Right cardiac atrium (tissue), 5 donors: ENCODE measurements at regions of chr1 and their contacts with region 1.

Region 1: DNA sequence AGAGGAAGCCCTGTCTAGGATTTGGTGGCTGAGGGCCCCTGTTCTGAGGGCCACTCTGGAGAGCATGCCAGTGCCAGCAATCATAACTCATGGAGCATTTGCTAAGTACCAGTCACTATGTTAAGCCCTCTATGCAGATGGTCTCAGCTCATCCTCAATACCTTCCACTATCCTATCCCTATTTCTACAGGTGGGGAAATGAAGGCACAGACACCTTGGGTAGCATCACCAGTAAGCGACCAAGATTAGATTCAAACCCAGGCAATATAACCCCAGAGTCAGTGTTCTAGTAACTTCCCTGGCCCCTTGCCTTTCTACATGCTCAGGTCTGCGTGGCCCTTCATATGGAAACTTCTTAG is 7.9 kb upstream of the NBPF1 start:
- DNase-seq: no peak
- ATAC-seq: no peak
- H3K4me3 ChIP-seq: no peak overlapping the region
- H3K27ac ChIP-seq: no peak overlapping the region
- H3K4me1 ChIP-seq: no peaks in the 10 kb centered on the region
- H3K27me3 ChIP-seq: no peaks in the 10 kb centered on the region

Region 2: GRCh38 chr1:16464903-16465625 is 156.2 kb before region 1 on chr1:
- intact Hi-C with region 1: no loop called
- DNase-seq: no peak
- ATAC-seq: no peak
- H3K4me3 ChIP-seq: no peak overlapping the region
- H3K27ac ChIP-seq: no peak overlapping the region
- H3K4me1 ChIP-seq: no peaks in the 10 kb centered on the region
- H3K27me3 ChIP-seq: no peaks in the 10 kb centered on the region

Region 3: GRCh38 chr1:16946646-16947045 is 325.4 kb after region 1 on chr1:
- intact Hi-C with region 1: loop called in 3 of 4 experiments (anchors 2 to 5 kb)
- DNase-seq: peak in 1 of 3 donors; percentile 40
- ATAC-seq: no peak
- H3K4me3 ChIP-seq: no peak overlapping the region
- H3K27ac ChIP-seq: no peak overlapping the region
- H3K4me1 ChIP-seq: no peaks in the 10 kb centered on the region
- H3K27me3 ChIP-seq: no peaks in the 10 kb centered on the region